ENCODE measurements at regions of chr3 and their contacts with region 1.

Region 1: DNA sequence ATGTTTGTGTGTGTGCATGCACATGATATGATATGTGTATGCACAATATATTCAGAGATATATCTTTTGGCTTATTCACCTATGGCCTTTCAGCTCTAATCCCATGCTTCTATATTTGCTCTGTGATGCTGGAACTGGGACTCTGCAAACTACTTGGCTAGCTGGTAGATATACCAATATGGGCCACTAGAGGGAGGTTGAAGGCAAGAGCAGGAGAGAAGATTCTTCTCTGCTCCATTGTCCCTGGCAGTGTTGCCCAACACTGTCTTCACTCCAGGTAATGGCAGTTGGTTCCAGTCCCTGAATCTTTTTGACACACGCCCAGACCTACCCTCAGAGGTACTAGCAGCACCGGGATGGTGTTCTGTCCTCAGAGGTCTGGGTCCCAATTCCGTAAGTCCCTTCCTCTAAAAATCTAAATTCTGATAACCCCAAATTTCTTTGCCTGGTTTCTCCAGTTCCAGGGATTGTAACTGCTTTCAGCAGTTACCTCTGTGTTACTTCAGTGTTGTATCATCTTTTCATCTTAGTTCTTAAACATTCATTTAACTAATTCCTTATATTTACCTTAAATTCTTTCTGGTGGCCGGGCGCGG is 44.7 kb downstream of the GTPBP8 start:
- DNase-seq: no peak
- H3K4me3 ChIP-seq: no peak overlapping the region
- CTCF ChIP-seq: peak; percentile 82

Region 2: DNA sequence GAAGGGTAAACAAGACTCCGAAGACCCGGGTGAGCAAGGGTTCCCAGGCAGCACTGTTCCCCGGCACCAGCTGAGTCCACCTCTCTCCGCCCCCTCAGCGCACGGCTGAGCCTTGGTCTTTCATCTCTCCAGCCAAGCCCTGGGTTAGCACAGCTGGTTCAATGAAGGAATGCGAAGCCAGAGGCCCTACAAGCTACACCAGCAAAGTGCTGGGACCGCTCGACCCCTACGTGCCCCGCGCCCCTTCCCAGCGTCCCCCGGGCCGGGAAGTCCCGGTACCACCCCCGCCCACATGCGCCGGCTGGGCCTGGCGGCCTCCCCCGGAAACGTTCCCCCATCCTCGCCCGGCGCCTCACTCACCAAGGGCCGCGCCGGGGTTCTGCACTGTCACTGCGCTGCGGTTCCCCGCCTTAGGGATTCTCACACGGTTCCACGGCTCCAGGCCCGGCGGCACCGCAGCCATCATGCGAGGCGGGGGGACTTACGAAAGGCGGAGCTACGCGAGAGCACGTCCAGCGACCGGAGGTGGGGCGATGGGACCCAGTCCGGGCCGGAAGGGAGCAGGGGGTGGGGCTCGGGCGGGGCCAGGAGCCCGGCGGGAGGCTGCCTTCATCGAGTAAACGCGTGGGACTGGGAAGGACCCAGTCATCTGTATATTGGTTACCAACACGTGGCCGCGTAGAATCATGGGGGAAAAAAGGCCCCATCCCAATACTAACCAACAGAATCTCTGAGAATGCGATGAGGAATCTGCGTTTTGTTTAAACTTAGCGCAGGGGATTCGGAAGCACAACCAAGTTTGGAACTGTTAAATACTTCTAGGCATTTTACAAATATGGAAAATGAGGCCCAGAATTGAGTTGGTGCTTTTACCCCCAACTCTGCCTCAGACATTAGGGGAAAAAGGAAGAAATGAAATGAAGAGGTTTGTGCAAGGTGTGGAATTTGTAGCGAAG is 16.0 kb before region 1 on chr3:
- CTCF ChIA-PET with region 1: interaction called, 61 read pairs
- POLR2A ChIA-PET with region 1: no interaction called
- DNase-seq: peak; percentile 59
- H3K4me3 ChIP-seq: peak overlapping the region; percentile 82
- CTCF ChIP-seq: no peak

Region 3: GRCh38 chr3:113051302-113051711 is 15.8 kb after region 1 on chr3:
- CTCF ChIA-PET with region 1: interaction called, 33 read pairs
- POLR2A ChIA-PET with region 1: no interaction called
- DNase-seq: no peak
- H3K4me3 ChIP-seq: no peak overlapping the region
- CTCF ChIP-seq: peak; percentile 63

Region 4: GRCh38 chr3:113626503-113627371 is 591.3 kb after region 1 on chr3:
- CTCF ChIA-PET with region 1: interaction called, 11 read pairs
- POLR2A ChIA-PET with region 1: no interaction called
- DNase-seq: peak; percentile 3
- H3K4me3 ChIP-seq: no peak overlapping the region; the same call in 1 of the 2 replicates
- CTCF ChIP-seq: peak; percentile 74